Activated CD4-positive, alpha-beta T cell treated with anti-CD3 and anti-CD28 coated beads, Interleukin-2, amount 10 ng/mL, durations not matched to agents 7 days and 5 days (primary cell): ENCODE measurements at regions of chr3 and their contacts with region 1.

Region 1: GRCh38 chr3:197256836-197257444 is 41.5 kb downstream of the DLG1 start:
- DNase-seq: peak; percentile 57
- H3K4me3 Mint-ChIP-seq: no peak overlapping the region
- H3K27ac Mint-ChIP-seq: no peak overlapping the region
- H3K4me1 Mint-ChIP-seq: peaks cover 27% of the 10 kb centered on the region
- H3K27me3 Mint-ChIP-seq: no peaks in the 10 kb centered on the region

Region 2: DNA sequence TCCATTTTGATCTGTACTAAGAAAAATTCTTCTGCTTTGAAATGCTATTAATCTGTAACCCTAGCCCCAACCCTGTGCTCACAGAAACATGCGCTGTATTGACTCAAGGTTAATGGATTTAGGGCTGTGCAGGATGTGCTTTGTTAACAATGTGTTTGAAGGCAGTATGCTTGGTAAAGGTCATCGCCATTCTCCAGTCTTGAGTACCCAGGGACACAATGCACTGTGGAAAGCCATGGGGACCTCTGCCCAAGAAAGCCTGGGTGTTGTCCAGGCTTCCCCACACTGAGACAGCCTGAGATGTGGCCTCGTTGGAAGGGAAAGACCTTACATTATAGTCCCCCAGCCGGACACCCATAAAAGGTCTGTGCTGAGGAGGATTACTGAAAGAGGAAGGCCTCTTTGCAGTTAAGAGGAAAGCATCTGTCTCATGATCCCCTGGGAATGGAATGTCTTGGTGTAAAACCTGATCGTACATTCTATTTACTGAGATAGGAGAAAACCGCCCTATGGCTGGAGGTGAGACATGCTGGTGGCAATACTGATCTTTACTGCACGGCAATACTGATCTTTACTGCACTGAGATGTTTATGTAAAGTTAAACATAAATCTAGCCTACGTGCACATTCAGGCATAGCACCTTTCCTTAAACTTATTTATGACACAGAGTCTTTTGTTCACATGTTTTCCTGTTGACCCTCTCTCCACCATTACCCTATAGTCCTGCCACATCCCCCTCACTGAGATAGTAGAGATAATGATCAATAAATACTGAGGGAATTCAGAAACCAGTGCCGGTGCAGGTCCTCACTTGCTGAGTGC is 294.6 kb before region 1 on chr3:
- CTCF ChIA-PET with region 1: no interaction called
- POLR2A ChIA-PET with region 1: no interaction called
- DNase-seq: no peak
- H3K4me3 Mint-ChIP-seq: no peak overlapping the region
- H3K27ac Mint-ChIP-seq: no peak overlapping the region
- H3K4me1 Mint-ChIP-seq: peaks cover 3% of the 10 kb centered on the region
- H3K27me3 Mint-ChIP-seq: no peaks in the 10 kb centered on the region

Region 3: DNA sequence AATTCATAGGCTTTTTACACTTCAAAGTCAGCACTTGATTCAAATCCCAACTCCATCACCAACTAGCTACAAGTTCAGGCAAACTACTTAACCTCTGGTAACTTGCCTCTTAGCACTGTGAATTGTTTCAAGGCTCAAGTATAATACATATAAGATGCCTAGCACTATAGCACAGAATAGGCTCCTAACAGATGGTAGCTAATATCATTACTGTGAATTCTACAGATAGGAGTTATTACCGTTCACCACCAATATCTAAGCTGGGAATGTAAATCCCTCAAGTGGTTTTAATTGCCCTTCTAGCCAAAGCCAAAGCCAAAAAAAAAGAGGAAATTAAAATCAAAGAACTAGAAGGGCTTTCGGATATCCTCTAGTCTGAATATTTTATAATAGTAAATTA is 26.1 kb after region 1 on chr3:
- CTCF ChIA-PET with region 1: no interaction called
- POLR2A ChIA-PET with region 1: no interaction called
- DNase-seq: no peak
- H3K4me3 Mint-ChIP-seq: no peak overlapping the region
- H3K27ac Mint-ChIP-seq: no peak overlapping the region
- H3K4me1 Mint-ChIP-seq: peaks cover 4% of the 10 kb centered on the region
- H3K27me3 Mint-ChIP-seq: no peaks in the 10 kb centered on the region

Region 4: DNA sequence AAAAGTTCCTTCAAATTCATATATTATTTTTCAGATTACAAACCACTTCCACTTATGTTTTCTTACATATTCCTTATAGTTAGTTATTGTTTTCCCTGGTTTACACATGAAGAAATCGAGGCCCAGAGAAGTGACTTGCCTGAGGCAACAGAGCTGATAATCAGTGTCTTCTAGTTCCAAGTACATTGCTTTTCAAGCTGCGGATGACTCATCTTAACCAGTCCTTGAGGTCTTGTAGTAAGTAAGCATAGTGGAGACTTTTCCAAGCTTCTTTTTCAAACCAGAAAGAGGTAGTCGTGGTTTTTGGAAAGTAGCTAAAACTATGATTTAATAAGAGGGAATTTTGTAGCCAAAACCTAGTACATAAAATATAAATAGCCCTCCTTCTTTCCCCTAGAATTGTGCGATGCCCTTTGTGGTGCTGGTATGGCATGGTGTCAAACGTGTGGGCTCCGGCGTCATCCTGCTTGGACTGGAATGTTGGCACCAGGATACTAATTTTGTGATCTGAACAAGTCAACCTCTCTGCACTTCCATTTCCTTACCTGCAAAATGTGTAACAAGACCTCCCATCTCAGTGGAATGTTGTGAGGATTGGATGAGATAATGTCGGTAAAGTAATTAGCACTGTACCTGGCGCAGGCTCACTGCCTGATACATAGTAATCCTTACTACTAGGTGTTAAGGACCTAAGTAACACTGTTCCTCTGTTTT is 60.5 kb after region 1 on chr3:
- CTCF ChIA-PET with region 1: no interaction called
- POLR2A ChIA-PET with region 1: no interaction called
- DNase-seq: no peak
- H3K4me3 Mint-ChIP-seq: no peak overlapping the region
- H3K27ac Mint-ChIP-seq: no peak overlapping the region
- H3K4me1 Mint-ChIP-seq: no peaks in the 10 kb centered on the region
- H3K27me3 Mint-ChIP-seq: peaks cover 54% of the 10 kb centered on the region

Region 5: GRCh38 chr3:197501879-197502620 is 245.1 kb after region 1 on chr3:
- CTCF ChIA-PET with region 1: interaction called, 14 read pairs
- POLR2A ChIA-PET with region 1: no interaction called
- DNase-seq: peak; percentile 44
- H3K4me3 Mint-ChIP-seq: no peak overlapping the region
- H3K27ac Mint-ChIP-seq: no peak overlapping the region
- H3K4me1 Mint-ChIP-seq: no peaks in the 10 kb centered on the region
- H3K27me3 Mint-ChIP-seq: no peaks in the 10 kb centered on the region